Panc1 (cell line): ENCODE measurements at regions of chrX and their contacts with region 1.

Region 1: DNA sequence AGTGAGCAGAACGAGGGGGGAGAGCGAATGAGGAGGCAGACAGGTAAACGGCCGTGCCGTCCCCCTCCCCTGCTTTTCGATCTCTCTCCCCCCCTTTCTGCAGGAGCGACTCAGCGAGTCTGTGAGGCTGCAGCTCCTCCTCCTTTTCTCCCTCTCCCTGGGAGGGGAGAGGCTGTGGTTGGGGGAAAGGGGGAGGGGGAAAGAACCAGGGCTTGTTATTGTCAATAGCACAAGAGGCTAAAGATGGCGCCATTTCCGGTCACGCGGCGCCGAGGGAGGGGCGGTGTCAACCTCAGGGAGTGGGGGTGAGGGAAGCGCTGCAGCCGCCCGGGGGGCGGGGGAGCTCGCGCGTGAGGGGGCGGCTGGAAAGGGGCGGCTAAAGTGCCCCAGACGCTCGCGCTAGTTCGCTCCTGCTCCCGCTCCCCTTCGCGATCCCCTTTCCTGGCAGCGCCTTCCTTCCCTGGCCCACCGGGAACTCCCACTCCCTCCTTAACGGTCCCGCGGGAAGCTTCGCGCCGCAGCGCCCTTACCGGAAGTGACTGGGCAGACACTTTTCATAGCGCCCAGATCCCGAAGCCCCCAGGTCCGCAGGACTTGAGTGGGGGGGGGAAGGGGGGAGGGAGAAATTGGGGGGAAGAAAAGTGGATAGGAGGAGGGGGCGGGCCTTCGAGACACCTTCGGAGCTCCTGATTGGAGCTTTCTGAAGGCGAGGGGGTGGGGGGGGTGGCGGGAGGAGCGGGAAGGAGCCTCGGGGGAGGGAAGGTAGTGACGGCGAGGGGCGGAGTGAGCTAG is at the start of gene CUL4B:
- DNase-seq: peak; percentile 90
- ATAC-seq: peak; percentile 91
- H3K4me3 ChIP-seq: peak within 1 kb of the TSS; percentile 93 to 99
- H3K27ac ChIP-seq: peak within 1 kb of the TSS; percentile 98
- H3K4me1 ChIP-seq: peaks cover 12% of the 10 kb centered on the region; the same call in 1 of the 2 replicates
- H3K27me3 ChIP-seq: no peaks in the 10 kb centered on the region
- CTCF ChIP-seq: no peak
- total RNA-seq, gene CUL4B: 99.8 TPM

Region 2: GRCh38 chrX:120549483-120550452 is 11.3 kb before region 1 on chrX:
- CTCF ChIA-PET with region 1: no interaction called
- POLR2A ChIA-PET with region 1: interaction called, 18 read pairs
- in situ Hi-C with region 1: no loop called
- intact Hi-C with region 1: no loop called
- DNase-seq: peak; percentile 87
- ATAC-seq: peak; percentile 98
- H3K4me3 ChIP-seq: peak overlapping the region in 1 of 2 experiments; percentile 14; a peak in 2 of 4 replicates
- H3K27ac ChIP-seq: peak overlapping the region; percentile 93
- H3K4me1 ChIP-seq: peaks cover 29% of the 10 kb centered on the region
- H3K27me3 ChIP-seq: no peaks in the 10 kb centered on the region
- CTCF ChIP-seq: no peak

Region 3: DNA sequence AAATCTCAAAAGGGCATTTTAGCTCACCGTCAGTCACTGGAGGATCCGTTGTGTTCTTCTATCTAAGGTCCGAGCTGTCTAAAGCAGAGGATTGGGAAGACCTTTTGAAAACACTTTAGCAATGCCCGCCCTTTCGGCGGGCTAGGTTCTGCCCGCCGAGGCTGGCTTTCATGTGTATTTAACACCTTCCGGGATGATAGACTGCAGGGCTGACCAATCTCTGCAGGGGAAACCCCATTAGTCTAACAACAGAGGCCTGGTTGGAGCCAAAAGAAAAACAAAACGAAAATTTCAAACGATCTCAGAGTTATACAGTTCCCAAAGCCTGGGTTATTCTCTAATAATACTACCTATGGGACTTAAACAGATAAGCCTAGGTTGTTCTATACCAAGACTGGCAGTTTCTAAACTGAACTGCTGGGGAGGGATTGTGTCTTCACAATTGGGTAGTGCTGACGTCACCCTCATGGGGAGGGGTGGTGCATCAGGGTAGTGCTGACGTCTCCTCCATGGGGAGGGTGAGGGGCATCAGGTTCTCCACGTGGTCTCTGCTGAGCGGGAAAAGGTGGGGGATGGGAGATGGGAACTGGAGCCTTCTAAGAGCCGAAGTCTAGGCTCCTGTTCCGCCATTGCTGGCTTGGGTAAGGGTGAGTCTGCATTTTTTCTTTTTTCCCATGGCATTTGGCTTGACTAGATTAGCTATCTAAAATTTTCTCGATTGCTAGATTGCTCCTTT is 14.5 kb after region 1 on chrX:
- CTCF ChIA-PET with region 1: no interaction called
- POLR2A ChIA-PET with region 1: interaction called, 12 read pairs
- in situ Hi-C with region 1: no loop called
- intact Hi-C with region 1: no loop called
- DNase-seq: no peak
- ATAC-seq: no peak
- H3K4me3 ChIP-seq: no peak overlapping the region
- H3K27ac ChIP-seq: no peak overlapping the region
- H3K4me1 ChIP-seq: no peaks in the 10 kb centered on the region
- H3K27me3 ChIP-seq: no peaks in the 10 kb centered on the region
- CTCF ChIP-seq: no peak

Region 4: GRCh38 chrX:120603707-120604360 is 42.8 kb after region 1 on chrX and contains the start of gene MCTS1:
- CTCF ChIA-PET with region 1: no interaction called
- POLR2A ChIA-PET with region 1: interaction called, 36 read pairs
- in situ Hi-C with region 1: no loop called
- intact Hi-C with region 1: no loop called
- DNase-seq: peak; percentile 93
- ATAC-seq: peak; percentile 100
- H3K4me3 ChIP-seq: peak within 1 kb of the TSS; percentile 93 to 94
- H3K27ac ChIP-seq: peak within 1 kb of the TSS; percentile 97
- H3K4me1 ChIP-seq: 0 out of 2 replicates have a peak, but pooled peaks cover 4% of the 10 kb centered on the region
- H3K27me3 ChIP-seq: no peaks in the 10 kb centered on the region
- CTCF ChIP-seq: no peak
- total RNA-seq, gene MCTS1: 110 TPM